ENCODE measurements at regions of chr5 and their contacts with region 1.

Region 1: DNA sequence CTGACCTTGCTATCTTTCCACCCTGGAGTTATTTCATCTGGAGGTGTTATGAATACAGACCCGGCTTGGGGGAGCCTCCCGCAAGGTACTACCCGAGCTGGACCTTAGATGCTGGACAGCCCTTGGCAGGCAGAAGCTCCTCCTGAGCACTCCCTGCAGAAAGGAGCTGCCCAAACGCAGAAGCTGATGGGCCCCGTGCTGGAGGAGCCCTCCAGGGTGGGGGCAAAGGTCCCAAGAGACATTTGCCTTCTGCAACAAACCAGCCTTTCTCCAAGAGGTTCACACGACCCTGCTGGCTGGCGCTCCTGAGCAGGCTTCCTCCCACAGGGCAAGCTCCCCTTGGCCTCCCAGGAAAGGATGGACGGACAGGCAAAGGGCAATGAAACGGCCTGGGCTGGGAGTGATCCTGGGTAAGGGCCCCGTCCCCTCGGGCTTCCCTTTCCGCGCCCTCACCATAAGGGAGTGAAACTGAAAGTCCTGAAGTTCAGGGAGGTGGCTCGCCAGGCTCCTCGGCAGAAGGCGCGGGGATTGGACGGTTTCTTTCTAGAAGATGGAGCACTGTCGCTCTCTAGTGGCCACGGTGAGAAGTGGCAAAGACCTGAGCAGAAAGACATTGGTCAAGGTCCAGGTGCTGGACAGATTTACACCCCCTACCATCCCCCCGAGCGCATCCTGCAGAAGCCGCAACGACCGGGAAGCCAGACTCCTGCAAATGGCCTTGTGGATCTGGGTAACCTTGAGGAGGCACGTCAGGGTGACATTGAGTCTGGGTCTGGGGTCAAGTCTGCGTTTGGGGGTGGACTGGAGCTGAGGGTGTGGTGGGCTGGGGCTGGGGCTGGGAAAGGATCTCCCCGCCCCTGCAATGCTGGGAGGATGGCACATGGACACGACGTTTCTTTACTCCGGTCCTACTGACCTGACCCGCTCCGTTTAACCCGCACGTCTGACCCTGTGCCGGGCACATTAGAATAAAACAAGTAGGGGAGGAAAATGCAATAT is 56.4 kb downstream of the NEURL1B start:
- DNase-seq: no peak
- H3K4me3 ChIP-seq: peak overlapping the region; percentile 68
- CTCF ChIP-seq: peak; percentile 82

Region 2: GRCh38 chr5:172466062-172466461 is 231.4 kb before region 1 on chr5:
- CTCF ChIA-PET with region 1: interaction called, 110 read pairs
- POLR2A ChIA-PET with region 1: no interaction called
- DNase-seq: no peak
- H3K4me3 ChIP-seq: no peak overlapping the region
- CTCF ChIP-seq: no peak

Region 3: GRCh38 chr5:172479044-172479783 is 218.2 kb before region 1 on chr5:
- CTCF ChIA-PET with region 1: interaction called, 412 read pairs
- POLR2A ChIA-PET with region 1: interaction called, 3 read pairs
- DNase-seq: peak; percentile 36
- H3K4me3 ChIP-seq: no peak overlapping the region
- CTCF ChIP-seq: peak; percentile 89

Region 4: DNA sequence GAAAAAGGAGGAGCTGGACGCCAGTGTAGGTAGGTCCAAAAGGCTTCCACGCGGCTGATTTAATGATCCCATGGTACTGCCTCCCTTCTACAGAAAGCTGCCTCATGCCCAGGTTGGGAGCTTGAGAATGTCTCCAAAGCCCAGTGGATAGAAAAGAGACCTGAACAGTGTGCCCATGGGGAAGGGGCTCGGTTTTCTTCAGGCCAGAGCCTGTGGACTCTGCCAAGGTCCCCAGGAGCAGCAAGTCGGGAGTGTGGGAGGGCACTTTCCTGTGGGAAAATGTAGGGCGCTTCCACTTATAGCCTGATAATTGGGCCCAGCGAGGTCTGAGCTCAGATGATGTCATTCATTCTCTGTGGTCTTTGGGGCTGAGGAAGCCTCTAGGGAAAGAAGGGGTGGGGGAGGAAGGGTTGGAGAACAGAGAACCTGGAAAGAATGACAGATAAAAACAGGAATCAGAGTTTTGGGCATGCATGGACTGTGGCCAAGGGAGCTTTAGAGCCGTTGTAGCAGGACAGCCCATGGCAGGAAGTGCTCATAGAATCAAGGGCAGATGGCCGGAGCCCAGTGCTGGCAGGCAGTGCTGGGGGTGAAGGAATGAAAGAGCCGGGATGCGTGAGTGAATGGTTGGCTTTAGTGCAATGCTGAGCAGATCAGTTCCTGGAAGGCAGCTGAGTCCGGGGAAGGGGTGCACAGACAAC is 200.6 kb before region 1 on chr5:
- CTCF ChIA-PET with region 1: interaction called, 28 read pairs
- POLR2A ChIA-PET with region 1: no interaction called
- DNase-seq: no peak
- H3K4me3 ChIP-seq: no peak overlapping the region
- CTCF ChIP-seq: no peak

Region 5: GRCh38 chr5:172597755-172598155 is 99.7 kb before region 1 on chr5:
- CTCF ChIA-PET with region 1: no interaction called
- POLR2A ChIA-PET with region 1: no interaction called
- DNase-seq: no peak
- H3K4me3 ChIP-seq: no peak overlapping the region
- CTCF ChIP-seq: no peak

Region 6: GRCh38 chr5:172672680-172673079 is 24.7 kb before region 1 on chr5:
- CTCF ChIA-PET with region 1: interaction called, 10 read pairs
- POLR2A ChIA-PET with region 1: no interaction called
- DNase-seq: no peak
- H3K4me3 ChIP-seq: no peak overlapping the region
- CTCF ChIP-seq: no peak

Region 7: GRCh38 chr5:172707285-172708182 is 10.1 kb after region 1 on chr5:
- CTCF ChIA-PET with region 1: interaction called, 61 read pairs
- POLR2A ChIA-PET with region 1: no interaction called
- DNase-seq: peak; percentile 24
- H3K4me3 ChIP-seq: 0 out of 2 replicates have a peak overlapping the region, but pooled peaks have one; percentile 8
- CTCF ChIP-seq: peak; percentile 75